Tibial artery (tissue), 4 donors: ENCODE measurements at regions of chr6 and their contacts with region 1.

Region 1: DNA sequence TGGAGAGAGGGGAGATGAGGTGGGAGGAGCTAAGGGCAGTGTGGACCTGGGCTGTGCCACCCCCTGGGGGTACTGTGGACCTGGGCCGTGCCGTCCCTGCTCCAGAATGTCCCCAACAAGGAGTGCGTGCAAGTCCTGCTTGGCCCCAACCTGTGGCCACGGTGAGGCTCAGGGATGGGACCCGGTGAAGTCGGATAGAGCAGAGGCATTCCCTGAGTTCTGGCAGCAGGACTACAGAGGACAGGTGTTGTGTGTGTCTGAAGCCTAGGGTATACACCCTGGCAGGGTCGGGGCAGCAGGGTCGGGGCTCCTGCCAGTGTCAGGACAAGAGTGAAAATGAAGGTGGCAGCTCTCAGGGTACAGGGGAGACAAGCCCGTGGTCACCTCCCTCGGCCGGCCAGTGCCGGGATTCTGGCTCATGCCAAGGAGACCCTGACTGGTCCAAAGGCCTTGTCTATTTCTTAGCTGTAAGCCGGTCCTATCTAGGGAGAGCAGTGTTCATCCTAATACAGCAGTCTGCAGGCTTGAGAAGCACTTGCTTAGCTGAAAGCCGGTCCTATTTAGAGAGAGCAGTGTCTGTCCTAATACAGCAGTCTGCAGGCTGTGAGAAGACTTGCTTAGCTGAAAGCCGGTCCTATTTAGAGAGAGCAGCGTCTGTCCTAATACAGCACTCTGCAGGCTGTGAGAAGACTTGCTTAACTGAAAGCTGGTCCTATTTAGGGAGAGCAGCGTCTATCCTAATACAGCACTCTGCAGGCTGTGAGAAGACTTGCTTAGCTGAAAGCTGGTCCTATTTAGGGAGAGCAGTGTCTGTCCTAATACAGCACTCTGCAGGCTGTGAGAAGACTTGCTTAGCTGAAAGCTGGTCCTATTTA is 95.9 kb downstream of the SMOC2 start:
- DNase-seq: no peak
- H3K4me3 ChIP-seq: no peak overlapping the region
- H3K27ac ChIP-seq: peak overlapping the region; percentile 66
- H3K4me1 ChIP-seq: peaks cover 0 to 74% (median 48%) of the 10 kb centered on the region in 4 donors
- H3K27me3 ChIP-seq: no peaks in the 10 kb centered on the region
- CTCF ChIP-seq: peak in 1 of 2 experiments; percentile 23

Region 2: GRCh38 chr6:168284217-168284616 is 252.7 kb before region 1 on chr6:
- intact Hi-C with region 1: no loop called
- DNase-seq: peak in 1 of 2 donors; percentile 21
- H3K4me3 ChIP-seq: no peak overlapping the region
- H3K27ac ChIP-seq: no peak overlapping the region
- H3K4me1 ChIP-seq: no peaks in the 10 kb centered on the region
- H3K27me3 ChIP-seq: peaks cover 0 to 31% of the 10 kb centered on the region in 2 donors
- CTCF ChIP-seq: no peak

Region 3: DNA sequence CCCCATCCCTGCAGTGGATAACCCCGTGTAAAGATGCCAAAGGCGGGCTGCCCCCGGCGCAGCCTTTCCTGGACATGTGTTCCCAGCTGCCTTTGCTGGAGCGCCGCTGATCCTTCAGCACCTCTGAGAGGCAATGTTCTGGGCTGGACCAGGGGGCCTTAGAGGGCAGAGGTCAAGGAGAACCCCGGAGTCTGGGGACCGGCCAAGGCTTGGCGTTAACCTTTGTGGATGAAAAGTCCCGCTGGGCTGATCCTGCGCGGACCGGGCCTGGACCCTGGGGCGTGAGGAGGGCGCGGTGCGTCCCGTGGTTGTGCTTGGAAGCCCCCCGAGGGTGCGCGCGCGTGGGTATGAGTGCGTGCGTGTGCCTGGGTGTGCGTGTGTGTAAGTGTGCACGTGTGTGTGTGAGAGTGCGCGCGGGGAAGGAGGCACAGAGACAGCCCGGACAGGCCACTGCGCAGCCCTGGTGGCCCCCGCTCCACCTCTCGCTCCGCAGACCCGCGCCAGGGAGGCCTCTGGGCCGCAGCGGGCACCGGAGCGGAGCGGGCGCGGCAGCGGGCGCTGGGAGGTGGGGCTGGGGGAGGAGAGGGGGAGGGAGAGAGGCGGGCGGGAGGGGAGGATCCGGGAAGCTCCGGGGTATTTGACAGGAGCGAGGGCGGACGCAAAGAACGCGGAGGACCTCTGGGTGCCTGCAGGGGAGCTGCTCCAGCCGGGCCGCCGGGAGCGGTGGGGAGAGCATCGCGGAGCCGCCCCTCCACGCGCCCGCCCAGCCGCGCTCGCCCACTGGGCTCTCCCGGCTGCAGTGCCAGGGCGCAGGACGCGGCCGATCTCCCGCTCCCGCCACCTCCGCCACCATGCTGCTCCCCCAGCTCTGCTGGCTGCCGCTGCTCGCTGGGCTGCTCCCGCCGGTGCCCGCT is 96.1 kb before region 1 on chr6 and contains the start of gene SMOC2:
- intact Hi-C with region 1: loop called (anchors 5 kb)
- DNase-seq: no peak
- H3K4me3 ChIP-seq: peak within 1 kb of the TSS; percentile 77 to 95
- H3K27ac ChIP-seq: peak within 1 kb of the TSS; percentile 79 to 86
- H3K4me1 ChIP-seq: peaks cover 0 to 39% (median 20%) of the 10 kb centered on the region in 4 donors
- H3K27me3 ChIP-seq: no peaks in the 10 kb centered on the region
- CTCF ChIP-seq: no peak

Region 4: GRCh38 chr6:168563656-168564055 is 26.8 kb after region 1 on chr6:
- intact Hi-C with region 1: no loop called
- DNase-seq: no peak
- H3K4me3 ChIP-seq: no peak overlapping the region
- H3K27ac ChIP-seq: no peak overlapping the region
- H3K4me1 ChIP-seq: no peaks in the 10 kb centered on the region
- H3K27me3 ChIP-seq: no peaks in the 10 kb centered on the region
- CTCF ChIP-seq: no peak